MCF 10A (cell line): ENCODE measurements at regions of chr1 and their contacts with region 1.

Region 1: DNA sequence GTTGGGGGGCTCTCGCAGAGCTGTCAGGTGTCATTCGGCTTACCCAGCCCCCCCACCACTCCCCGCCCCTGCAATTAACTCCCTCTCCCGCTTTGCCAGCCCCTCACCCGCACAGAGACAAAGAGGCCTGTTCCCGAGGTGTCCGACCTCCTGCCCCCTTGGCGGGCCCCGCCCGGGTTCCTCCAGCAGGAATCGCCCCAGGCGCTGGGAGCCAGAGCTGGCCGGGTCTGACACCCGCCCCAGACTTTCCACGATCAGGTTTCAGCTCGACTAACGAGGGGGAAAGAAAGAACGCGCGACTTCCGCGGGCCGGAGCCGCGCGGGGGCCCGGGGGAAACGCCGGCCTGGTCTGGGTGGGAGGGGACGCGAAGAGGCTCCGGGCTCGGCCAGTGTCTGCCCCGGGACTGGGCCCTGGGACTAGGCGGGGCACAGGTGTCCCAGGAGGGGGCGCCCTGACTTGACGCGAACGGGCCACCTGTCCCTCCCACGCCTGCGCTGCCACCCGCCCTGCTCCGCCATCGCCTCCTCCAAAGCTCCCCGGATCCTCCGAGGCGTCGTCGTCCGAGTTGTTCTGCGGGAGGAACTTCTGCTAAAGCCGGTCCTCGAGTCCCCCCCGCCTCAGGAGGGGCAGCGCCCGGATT is 36.4 kb upstream of the HHAT start:
- DNase-seq: peak; percentile 62
- H3K4me3 Mint-ChIP-seq: peak overlapping the region; percentile 63
- H3K27ac Mint-ChIP-seq: peak overlapping the region; percentile 26
- H3K4me1 Mint-ChIP-seq: peaks cover 5% of the 10 kb centered on the region
- H3K27me3 Mint-ChIP-seq: peaks cover 45% of the 10 kb centered on the region
- CTCF ChIP-seq: peak; percentile 36

Region 2: DNA sequence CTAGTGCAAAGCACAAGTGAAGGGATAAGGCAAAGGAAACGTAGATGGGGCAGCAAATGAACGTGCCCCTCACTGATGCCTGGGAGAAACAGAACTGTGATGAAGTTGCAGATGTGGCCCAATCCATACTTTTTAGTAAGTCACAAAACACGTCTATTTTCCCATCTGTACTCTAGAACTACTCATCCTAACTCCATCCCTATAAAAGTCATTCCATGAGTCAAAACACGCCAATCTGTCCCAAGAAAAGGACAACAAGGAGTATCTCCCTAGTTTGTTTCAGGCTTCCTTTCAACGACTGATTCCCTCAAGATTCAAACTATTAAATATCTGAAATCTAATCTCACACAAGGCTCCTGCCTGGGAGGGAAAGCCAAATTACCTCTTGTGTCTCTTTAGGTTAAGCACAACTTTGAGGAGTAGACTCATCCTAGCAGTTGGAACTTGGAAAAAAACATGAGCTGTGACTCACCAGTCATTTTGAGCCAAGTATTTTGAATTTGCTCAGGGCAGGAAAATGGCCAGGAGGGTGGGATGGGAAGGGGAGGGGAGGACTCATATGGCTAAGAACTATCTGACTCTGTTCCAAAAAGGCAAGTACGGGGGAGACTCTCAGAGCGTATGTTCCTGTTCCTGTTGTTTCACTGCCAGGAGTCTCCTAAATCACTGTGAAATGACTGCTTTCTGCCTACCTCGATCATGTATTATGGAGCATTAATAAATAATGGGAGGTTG is 923.3 kb before region 1 on chr1:
- CTCF ChIA-PET with region 1: no interaction called
- POLR2A ChIA-PET with region 1: no interaction called
- intact Hi-C with region 1: no loop called
- DNase-seq: peak; percentile 100
- H3K4me3 Mint-ChIP-seq: peak overlapping the region; percentile 40
- H3K27ac Mint-ChIP-seq: peak overlapping the region; percentile 86
- H3K4me1 Mint-ChIP-seq: peaks cover 90% of the 10 kb centered on the region
- H3K27me3 Mint-ChIP-seq: no peaks in the 10 kb centered on the region
- CTCF ChIP-seq: no peak

Region 3: GRCh38 chr1:210049616-210050015 is 242.7 kb before region 1 on chr1:
- CTCF ChIA-PET with region 1: no interaction called
- POLR2A ChIA-PET with region 1: no interaction called
- intact Hi-C with region 1: no loop called
- DNase-seq: no peak
- H3K4me3 Mint-ChIP-seq: no peak overlapping the region
- H3K27ac Mint-ChIP-seq: no peak overlapping the region
- H3K4me1 Mint-ChIP-seq: no peaks in the 10 kb centered on the region
- H3K27me3 Mint-ChIP-seq: peaks cover 46% of the 10 kb centered on the region
- CTCF ChIP-seq: no peak

Region 4: DNA sequence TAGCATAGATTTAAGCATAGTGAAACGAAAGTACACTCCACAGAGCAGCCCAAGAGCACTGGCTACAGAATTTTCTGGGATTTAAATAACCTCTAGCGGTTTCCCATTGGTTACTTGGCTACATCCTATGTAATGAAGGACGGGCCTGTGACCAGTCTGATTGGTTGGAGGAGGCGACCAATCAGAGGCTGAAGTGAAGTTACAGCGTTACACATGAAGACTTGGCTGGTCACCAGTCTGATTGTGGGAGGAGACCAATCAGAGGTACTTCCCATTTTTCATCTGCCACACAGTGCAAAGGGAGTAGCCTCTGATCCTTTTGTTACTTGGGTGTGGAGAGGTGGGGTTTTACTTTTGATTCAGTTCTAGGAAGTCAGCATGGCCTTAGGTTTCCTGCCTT is 202.5 kb before region 1 on chr1:
- CTCF ChIA-PET with region 1: no interaction called
- POLR2A ChIA-PET with region 1: no interaction called
- intact Hi-C with region 1: no loop called
- DNase-seq: peak; percentile 38
- H3K4me3 Mint-ChIP-seq: no peak overlapping the region
- H3K27ac Mint-ChIP-seq: no peak overlapping the region
- H3K4me1 Mint-ChIP-seq: no peaks in the 10 kb centered on the region
- H3K27me3 Mint-ChIP-seq: peaks cover 39% of the 10 kb centered on the region
- CTCF ChIP-seq: no peak

Region 5: GRCh38 chr1:210280221-210280620 is 12.1 kb before region 1 on chr1:
- CTCF ChIA-PET with region 1: interaction called, 12 read pairs
- POLR2A ChIA-PET with region 1: interaction called, 4 read pairs
- intact Hi-C with region 1: no loop called
- DNase-seq: no peak
- H3K4me3 Mint-ChIP-seq: no peak overlapping the region
- H3K27ac Mint-ChIP-seq: no peak overlapping the region
- H3K4me1 Mint-ChIP-seq: no peaks in the 10 kb centered on the region
- H3K27me3 Mint-ChIP-seq: peaks cover 34% of the 10 kb centered on the region
- CTCF ChIP-seq: no peak